Mammary epithelial cell (primary cell): ENCODE measurements at regions of chr12 and their contacts with region 1.

Region 1: DNA sequence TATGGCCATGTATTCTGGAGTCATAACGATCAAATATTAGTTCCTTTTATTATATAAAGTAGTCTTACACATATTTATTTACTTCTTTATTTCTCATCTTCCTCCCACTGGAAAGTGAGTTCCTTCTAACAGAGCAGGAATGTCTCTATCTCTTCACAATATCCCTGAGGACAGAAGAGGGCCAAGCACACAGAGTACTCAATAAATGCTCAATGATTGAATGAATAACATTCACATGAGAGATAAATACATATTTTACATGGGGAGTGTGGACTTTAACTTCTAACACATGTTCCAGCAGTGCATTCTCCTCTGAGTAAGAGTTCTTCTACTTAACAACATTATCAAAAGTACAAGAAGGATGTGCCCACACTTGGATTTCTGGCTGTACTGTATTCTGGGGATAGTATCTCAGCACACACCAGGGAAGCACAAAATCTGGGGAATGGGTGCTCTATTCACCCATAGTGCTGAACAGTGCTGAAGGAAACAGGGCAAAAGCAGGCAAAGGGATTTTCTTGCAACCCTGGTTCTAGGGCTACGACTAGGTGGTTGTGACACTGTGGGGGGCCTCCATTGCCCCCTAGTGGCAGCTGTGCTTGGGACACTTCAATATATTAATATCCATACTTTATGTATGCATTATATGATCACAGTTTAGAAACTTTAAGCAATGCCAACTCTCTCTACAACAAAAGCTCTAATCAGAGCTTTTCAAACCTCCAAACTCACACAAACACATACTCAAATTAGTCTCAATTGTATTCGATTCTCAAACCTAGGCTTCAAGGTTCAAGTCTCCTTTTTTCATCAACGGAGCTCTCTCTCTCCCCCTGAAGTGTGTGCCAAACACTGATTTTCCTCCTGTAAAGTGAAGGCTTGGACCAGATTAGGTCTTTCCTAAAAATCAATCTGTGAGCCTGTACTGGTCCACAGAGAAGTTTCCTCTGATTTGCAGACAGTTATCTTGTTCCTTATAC is 115.5 kb downstream of the SLC2A13 start:
- DNase-seq: peak; percentile 19
- H3K4me3 ChIP-seq: no peak overlapping the region
- H3K27ac ChIP-seq: no peak overlapping the region
- H3K4me1 ChIP-seq: peaks cover 3% of the 10 kb centered on the region
- H3K27me3 ChIP-seq: no peaks in the 10 kb centered on the region
- CTCF ChIP-seq: peak; percentile 83 to 88

Region 2: GRCh38 chr12:39946361-39946948 is 44.0 kb before region 1 on chr12:
- CTCF ChIA-PET with region 1: no interaction called
- dilution Hi-C with region 1: no loop called
- in situ Hi-C with region 1: no loop called
- intact Hi-C with region 1: no loop called
- DNase-seq: peak; percentile 58
- H3K4me3 ChIP-seq: no peak overlapping the region
- H3K27ac ChIP-seq: no peak overlapping the region
- H3K4me1 ChIP-seq: peaks cover 9% of the 10 kb centered on the region
- H3K27me3 ChIP-seq: no peaks in the 10 kb centered on the region
- CTCF ChIP-seq: no peak

Region 3: DNA sequence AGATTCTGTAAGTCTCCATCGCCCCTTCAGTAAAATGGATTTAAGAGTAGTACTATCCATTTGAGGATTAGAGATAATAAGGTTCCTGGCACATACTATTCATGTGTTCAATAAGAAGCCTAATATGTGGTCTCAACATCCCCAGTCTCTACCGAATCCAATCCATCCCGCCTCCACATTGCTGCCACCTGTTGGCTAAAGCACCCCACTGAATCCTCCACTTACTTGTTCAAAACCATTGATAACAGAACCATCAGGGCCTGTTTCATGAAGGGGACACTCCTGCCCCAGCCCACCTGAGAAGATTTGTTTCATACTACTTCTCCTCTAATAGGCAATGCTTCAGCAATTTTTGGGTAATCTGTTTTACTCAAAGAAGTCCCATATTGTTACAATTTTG is 32.0 kb before region 1 on chr12:
- CTCF ChIA-PET with region 1: no interaction called
- dilution Hi-C with region 1: loop called (anchors 5 kb)
- in situ Hi-C with region 1: no loop called
- intact Hi-C with region 1: no loop called
- DNase-seq: no peak
- H3K4me3 ChIP-seq: no peak overlapping the region
- H3K27ac ChIP-seq: no peak overlapping the region
- H3K4me1 ChIP-seq: no peaks in the 10 kb centered on the region
- H3K27me3 ChIP-seq: no peaks in the 10 kb centered on the region
- CTCF ChIP-seq: peak; percentile 15 to 35

Region 4: DNA sequence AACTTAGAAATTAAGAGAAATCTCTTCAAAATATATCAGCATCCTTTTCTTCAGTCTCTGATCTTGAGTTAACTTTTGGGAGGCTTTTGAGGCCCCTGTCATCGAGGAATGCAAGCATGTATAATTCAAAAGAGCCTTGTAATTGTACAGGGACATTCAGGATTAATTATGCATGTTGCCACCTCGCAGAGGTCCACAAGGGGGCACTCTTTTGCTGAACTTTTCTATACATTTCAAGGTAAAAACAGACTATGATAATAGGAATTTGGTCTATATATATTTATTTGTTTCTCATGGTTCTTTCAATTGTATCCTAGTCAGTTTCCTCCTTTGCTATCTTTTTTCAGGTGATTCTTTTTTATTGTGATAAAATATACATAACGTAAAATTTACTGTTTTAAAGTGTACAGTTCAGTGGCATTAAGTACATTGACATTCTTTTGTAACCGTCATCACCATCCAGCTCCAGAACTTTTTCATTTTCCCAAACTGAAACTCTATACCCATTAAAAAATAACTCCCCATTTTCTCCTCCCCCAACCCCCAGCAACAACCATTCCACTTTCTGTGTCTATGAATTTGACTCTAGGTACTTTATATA is 162.5 kb after region 1 on chr12:
- CTCF ChIA-PET with region 1: no interaction called
- dilution Hi-C with region 1: no loop called
- in situ Hi-C with region 1: no loop called
- intact Hi-C with region 1: no loop called
- DNase-seq: peak; percentile 41
- H3K4me3 ChIP-seq: no peak overlapping the region
- H3K27ac ChIP-seq: no peak overlapping the region
- H3K4me1 ChIP-seq: peaks cover 13% of the 10 kb centered on the region
- H3K27me3 ChIP-seq: no peaks in the 10 kb centered on the region
- CTCF ChIP-seq: peak; percentile 80 to 87